Gastrocnemius medialis (tissue), 4 donors: ENCODE measurements at regions of chr16 and their contacts with region 1.

Region 1: GRCh38 chr16:3234543-3235541 is at the start of gene ZNF200:
- DNase-seq: peak; percentile 93 to 94
- ATAC-seq: peak; percentile 99 to 100
- H3K4me3 ChIP-seq: peak within 1 kb of the TSS; percentile 87 to 100 (median 99)
- H3K27ac ChIP-seq: peak within 1 kb of the TSS; percentile 96 to 100 (median 98)
- H3K4me1 ChIP-seq: peaks cover 12% of the 10 kb centered on the region in 2 donors
- H3K27me3 ChIP-seq: no peaks in the 10 kb centered on the region
- CTCF ChIP-seq: no peak
- POLR2A ChIP-seq: peak; percentile 60 to 72
- total RNA-seq, gene ZNF200: 0.49 to 3.2 (median 2.2) TPM

Region 2: GRCh38 chr16:3001316-3001715 is 233.5 kb before region 1 on chr16:
- in situ Hi-C with region 1: no loop called
- intact Hi-C with region 1: no loop called
- DNase-seq: no peak
- ATAC-seq: no peak
- H3K4me3 ChIP-seq: no peak overlapping the region
- H3K27ac ChIP-seq: no peak overlapping the region
- H3K4me1 ChIP-seq: peaks cover 4 to 6% of the 10 kb centered on the region in 2 donors
- H3K27me3 ChIP-seq: no peaks in the 10 kb centered on the region
- CTCF ChIP-seq: no peak
- POLR2A ChIP-seq: no peak

Region 3: DNA sequence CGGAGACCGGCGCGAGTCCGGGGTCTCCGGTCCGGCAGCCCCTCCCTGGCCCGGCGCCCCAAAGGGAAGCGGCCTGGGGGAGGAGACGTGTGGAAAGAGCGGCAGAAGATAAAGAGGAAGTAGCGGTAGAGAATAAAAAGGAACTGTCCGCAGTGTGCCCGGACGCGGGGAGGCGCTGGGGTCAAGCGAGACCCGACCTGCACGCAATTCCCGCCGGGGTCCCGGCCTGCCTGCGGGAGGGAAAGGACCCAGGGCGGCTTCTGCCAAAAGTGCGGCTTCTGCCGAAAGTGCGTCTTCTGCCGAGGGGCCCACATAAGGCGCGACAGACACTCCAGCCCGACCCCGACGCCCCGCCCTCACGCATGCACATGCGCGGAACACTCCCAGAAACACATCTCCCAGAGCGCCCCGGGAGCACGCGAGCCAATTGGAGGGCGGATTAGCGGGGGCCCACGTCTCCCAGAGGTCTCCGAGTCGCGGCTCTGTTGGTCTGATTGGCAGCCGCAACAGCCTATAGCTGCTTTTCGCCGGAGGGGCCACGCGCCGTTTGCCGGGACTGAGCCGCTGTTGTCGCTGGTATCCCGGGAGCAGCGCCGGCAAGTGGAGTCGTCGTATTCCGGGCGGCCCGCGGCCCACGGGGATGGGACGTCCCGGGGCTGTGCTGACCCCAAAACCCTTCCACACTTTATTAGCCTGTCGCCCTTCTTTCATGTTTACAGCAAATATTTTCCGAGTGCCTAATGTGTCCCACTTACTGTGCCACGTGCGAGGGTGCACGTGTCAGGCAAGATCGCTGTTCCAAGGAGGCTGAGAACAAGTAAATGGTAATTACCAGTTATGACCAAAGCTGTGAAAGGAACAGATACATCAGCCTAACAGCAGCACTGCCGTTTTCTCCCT is 29.5 kb after region 1 on chr16:
- in situ Hi-C with region 1: no loop called
- intact Hi-C with region 1: loop called (anchors 1 kb)
- DNase-seq: peak; percentile 93 to 95
- ATAC-seq: peak; percentile 91 to 93
- H3K4me3 ChIP-seq: peak overlapping the region; percentile 65 to 94 (median 78)
- H3K27ac ChIP-seq: peak overlapping the region; percentile 92 to 99 (median 94)
- H3K4me1 ChIP-seq: peaks cover 0 to 5% of the 10 kb centered on the region in 2 donors
- H3K27me3 ChIP-seq: no peaks in the 10 kb centered on the region
- CTCF ChIP-seq: peak in 4 of 5 experiments; percentile 23 to 42 (median 34)
- POLR2A ChIP-seq: peak; percentile 86 to 90

Region 4: DNA sequence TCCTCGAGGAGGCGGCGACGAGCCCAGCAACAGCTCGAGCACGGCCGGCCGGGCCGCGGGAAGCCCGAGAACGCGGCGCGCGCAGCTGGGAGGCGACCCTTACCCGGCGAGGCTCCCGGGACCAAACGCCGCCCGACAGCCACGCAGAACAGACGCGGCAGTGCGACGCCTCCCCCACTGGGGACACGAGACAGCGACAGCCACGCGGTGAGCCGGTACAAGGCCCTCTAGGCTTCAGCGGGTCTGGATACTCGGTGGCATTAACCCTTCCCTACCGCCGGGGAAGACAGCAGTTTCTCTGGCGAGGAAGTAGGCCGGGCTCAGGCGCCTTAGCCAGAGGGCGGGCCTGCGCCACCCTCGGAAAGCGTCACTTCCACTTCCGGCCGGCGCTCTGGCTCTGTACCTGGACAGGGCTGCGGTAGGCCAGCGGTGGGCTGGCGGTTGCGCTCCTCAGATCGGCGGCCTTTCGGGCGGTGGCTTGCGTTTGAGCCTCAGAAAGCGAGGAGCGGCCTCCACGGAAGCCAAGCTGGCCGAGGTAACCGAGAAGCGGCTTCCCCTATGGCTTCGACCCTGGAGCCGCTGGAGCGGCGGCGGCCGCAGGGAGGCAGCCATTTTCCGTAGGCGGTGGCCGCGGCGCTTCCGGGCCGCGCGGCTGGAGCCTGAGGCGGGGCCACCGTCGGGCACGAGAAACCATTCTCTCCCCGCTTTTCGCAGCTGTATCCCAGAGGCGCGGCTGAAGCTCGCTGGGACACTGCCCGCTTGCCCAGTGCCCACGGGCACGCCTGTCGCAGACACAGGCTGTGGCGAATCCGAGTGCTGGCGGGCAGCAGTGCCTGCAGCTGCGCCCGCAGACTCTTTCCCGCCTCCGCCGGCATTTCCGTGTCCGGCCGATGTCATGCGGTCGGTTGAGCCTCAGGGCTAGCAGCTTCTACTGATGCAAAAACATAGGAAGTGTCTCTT is 70.5 kb after region 1 on chr16 and contains the starts of genes TIGD7 and ZNF75A:
- in situ Hi-C with region 1: no loop called
- intact Hi-C with region 1: loop called (anchors 1 kb)
- DNase-seq: peak; percentile 78
- ATAC-seq: peak; percentile 97 to 98
- H3K4me3 ChIP-seq: peak within 1 kb of the TSS; percentile 75 to 83 (median 76)
- H3K27ac ChIP-seq: peak within 1 kb of the TSS; percentile 89 to 94 (median 92)
- H3K4me1 ChIP-seq: peaks cover 13 to 16% of the 10 kb centered on the region in 2 donors
- H3K27me3 ChIP-seq: no peaks in the 10 kb centered on the region
- CTCF ChIP-seq: peak in 4 of 5 experiments; percentile 20 to 35 (median 27)
- POLR2A ChIP-seq: peak; percentile 88 to 93
- total RNA-seq, gene TIGD7: 2.5 to 8.1 (median 4.4) TPM
- total RNA-seq, gene ZNF75A: 5.5 to 13.2 (median 12.5) TPM

Region 5: DNA sequence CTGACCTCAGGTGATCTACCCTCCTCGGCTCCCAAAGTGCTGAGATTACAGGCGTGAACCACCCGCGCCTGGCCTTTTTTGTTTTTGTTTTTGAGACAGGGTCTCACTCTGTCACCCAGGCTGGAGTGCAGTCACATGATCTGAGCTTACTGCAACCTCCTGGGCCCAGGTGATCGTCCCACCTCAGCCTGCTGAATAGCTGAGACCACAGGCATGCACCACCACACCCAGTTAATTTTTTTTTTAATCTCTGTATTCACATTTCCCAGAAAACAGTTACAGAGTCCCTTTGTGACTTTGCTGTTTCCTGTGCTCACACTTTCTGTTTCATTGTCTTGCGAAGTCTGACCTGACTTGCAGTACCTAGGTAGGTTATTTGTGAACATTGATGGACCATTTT is 268.7 kb after region 1 on chr16:
- in situ Hi-C with region 1: no loop called
- intact Hi-C with region 1: loop called (anchors 5 kb)
- DNase-seq: no peak
- ATAC-seq: no peak
- H3K4me3 ChIP-seq: no peak overlapping the region
- H3K27ac ChIP-seq: no peak overlapping the region
- H3K4me1 ChIP-seq: peaks cover 6 to 15% of the 10 kb centered on the region in 2 donors
- H3K27me3 ChIP-seq: no peaks in the 10 kb centered on the region
- CTCF ChIP-seq: no peak
- POLR2A ChIP-seq: no peak